IMR-90 (cell line): ENCODE measurements at regions of chr12 and their contacts with region 1.

Region 1: DNA sequence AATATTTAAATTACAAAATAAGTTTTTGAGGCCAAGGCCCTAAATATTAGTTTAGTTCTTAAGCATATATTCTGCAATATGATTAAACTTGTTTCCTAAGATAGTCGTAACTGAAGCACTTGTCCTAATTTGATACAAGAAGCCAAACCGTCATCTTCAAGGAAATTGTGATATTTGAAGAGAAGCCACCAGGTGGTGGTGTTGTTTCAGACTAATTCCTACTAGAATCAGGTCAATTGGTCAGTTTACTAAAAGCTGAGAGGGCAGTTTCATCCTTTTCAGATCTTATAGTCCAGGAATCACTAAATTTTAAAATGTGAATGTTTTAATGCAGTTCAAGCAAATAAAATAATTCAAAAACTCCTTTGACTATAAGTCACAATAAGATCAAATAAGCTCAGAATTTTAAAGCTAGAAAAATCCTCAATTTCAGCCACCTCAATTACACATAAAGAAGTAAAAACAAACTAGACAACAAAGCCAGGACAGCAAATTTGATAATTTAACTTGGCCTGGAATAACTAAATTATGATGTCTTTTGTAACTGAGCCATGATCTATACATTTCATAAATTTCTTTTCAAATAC is 7.1 kb upstream of the ARL1 start:
- DNase-seq: peak; percentile 67
- ATAC-seq: peak; percentile 72; the same call in 1 of the 2 replicates
- H3K4me3 ChIP-seq: no peak overlapping the region
- H3K27ac ChIP-seq: no peak overlapping the region
- H3K4me1 ChIP-seq: no peaks in the 10 kb centered on the region
- H3K27me3 ChIP-seq: no peaks in the 10 kb centered on the region
- CTCF ChIP-seq: peak; percentile 64
- POLR2A ChIP-seq: no peak
- RAD21 ChIP-seq: peak; percentile 69

Region 2: GRCh38 chr12:101305226-101305779 is 109.3 kb before region 1 on chr12:
- CTCF ChIA-PET with region 1: no interaction called
- POLR2A ChIA-PET with region 1: no interaction called
- dilution Hi-C with region 1: no loop called
- in situ Hi-C with region 1: no loop called
- intact Hi-C with region 1: no loop called
- DNase-seq: no peak
- ATAC-seq: no peak
- H3K4me3 ChIP-seq: no peak overlapping the region
- H3K27ac ChIP-seq: no peak overlapping the region
- H3K4me1 ChIP-seq: peaks cover 1% of the 10 kb centered on the region; the same call in 1 of the 2 replicates
- H3K27me3 ChIP-seq: no peaks in the 10 kb centered on the region
- CTCF ChIP-seq: no peak
- POLR2A ChIP-seq: no peak
- RAD21 ChIP-seq: no peak

Region 3: DNA sequence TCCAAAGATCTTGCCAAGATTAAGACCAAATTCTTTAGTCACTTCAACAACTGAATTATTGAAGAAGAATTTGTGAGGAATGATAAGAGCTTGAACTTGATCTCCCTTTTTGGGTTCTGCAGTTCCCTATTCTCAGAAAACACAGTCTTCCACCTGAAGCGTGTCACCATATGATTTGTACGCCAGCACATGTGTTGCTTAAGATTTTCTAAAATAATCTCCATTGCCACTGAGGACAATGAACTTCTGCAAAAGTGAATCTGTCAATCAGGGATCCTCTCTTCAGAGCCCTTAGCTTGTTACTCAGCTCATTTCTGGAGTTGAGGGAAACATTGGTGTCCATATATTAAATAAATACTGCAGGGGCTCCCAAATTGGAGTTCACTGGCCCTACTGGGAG is 56.3 kb after region 1 on chr12:
- CTCF ChIA-PET with region 1: no interaction called
- POLR2A ChIA-PET with region 1: no interaction called
- dilution Hi-C with region 1: no loop called
- in situ Hi-C with region 1: no loop called
- intact Hi-C with region 1: no loop called
- DNase-seq: no peak
- ATAC-seq: no peak
- H3K4me3 ChIP-seq: no peak overlapping the region
- H3K27ac ChIP-seq: no peak overlapping the region
- H3K4me1 ChIP-seq: no peaks in the 10 kb centered on the region
- H3K27me3 ChIP-seq: no peaks in the 10 kb centered on the region; the same call in 1 of the 2 replicates
- CTCF ChIP-seq: no peak
- POLR2A ChIP-seq: no peak
- RAD21 ChIP-seq: no peak

Region 4: DNA sequence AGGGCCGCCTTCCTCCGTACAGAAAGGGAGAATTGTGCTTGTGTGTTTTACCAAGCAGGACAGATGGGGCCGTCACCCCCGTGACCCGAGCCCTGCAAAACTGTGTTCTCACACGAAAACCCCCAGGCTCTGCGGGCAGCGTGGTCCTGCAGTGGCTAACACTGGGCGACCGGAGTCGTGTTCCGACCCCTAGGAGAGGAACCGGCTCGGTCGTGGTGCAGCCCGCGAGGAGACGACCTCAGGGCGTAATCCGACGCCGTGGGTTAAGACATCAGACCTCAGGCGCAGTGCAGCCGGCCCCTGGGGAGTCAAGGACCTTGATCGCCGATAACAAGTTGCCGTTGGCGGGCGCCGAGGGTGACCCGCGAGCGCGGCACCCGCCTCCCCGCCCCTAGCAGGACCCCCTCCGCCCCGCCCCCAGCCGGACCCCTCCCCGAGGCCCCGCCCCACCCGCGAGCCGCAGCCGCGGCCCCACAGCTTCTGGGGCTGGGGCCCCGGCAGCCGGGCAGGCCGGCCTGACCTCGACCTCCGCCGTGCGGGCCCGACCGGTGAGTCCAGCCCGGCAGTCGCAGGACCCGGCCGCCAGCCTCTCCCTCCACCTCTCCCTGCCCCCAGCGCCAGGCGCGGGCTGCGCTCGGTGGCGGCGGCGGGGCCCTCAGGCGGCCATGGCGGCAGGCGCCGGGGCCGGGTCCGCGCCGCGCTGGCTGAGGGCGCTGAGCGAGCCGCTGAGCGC is 282.7 kb after region 1 on chr12 and contains the start of gene CHPT1:
- CTCF ChIA-PET with region 1: no interaction called
- POLR2A ChIA-PET with region 1: no interaction called
- dilution Hi-C with region 1: no loop called
- in situ Hi-C with region 1: no loop called
- intact Hi-C with region 1: loop called (anchors 2 kb)
- DNase-seq: peak; percentile 38
- ATAC-seq: peak; percentile 86
- H3K4me3 ChIP-seq: peak within 1 kb of the TSS; percentile 99
- H3K27ac ChIP-seq: peak within 1 kb of the TSS; percentile 91
- H3K4me1 ChIP-seq: peaks cover 7% of the 10 kb centered on the region
- H3K27me3 ChIP-seq: no peaks in the 10 kb centered on the region
- CTCF ChIP-seq: 0 out of 2 replicates have a peak, but pooled peaks have one; percentile 2
- POLR2A ChIP-seq: no peak
- RAD21 ChIP-seq: no peak
- total RNA-seq, gene CHPT1: 8.1 and 18.6 TPM in 2 replicates

Region 5: DNA sequence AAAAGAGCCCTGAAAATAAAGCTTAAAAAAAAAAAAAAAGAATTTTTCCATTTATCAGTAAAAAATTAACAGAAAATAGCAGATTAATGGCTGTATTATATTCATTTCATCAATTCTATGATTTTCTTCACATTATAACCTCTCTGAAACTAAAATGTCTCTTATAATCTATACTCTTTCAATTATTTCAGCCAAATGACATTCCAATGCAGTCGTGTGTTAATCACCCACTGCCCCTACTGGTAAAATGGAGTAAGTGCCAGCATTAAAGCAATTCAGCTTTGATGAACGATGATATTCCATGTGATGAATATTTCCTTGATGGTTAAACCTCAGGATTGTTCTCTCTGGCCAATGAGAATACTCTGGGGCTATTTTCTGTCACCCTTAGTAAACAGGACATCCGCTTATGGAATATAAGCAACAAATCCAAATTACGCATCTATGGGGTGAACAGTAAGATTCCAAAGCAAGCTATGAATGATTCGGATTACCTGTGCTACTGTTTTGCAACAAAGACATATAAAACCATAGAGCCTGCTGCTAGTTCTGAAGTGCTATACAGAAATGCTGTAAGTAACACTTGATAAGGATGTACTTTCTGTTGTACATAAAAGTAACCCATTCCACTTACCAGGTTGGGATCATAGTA is 344.9 kb after region 1 on chr12:
- CTCF ChIA-PET with region 1: interaction called, 4 read pairs
- POLR2A ChIA-PET with region 1: no interaction called
- dilution Hi-C with region 1: no loop called
- in situ Hi-C with region 1: loop called (anchors 10 kb)
- intact Hi-C with region 1: loop called (anchors 2 kb)
- DNase-seq: peak; percentile 35
- ATAC-seq: peak; percentile 75
- H3K4me3 ChIP-seq: no peak overlapping the region
- H3K27ac ChIP-seq: no peak overlapping the region
- H3K4me1 ChIP-seq: no peaks in the 10 kb centered on the region
- H3K27me3 ChIP-seq: no peaks in the 10 kb centered on the region
- CTCF ChIP-seq: peak; percentile 73
- POLR2A ChIP-seq: no peak
- RAD21 ChIP-seq: peak; percentile 65

Region 6: DNA sequence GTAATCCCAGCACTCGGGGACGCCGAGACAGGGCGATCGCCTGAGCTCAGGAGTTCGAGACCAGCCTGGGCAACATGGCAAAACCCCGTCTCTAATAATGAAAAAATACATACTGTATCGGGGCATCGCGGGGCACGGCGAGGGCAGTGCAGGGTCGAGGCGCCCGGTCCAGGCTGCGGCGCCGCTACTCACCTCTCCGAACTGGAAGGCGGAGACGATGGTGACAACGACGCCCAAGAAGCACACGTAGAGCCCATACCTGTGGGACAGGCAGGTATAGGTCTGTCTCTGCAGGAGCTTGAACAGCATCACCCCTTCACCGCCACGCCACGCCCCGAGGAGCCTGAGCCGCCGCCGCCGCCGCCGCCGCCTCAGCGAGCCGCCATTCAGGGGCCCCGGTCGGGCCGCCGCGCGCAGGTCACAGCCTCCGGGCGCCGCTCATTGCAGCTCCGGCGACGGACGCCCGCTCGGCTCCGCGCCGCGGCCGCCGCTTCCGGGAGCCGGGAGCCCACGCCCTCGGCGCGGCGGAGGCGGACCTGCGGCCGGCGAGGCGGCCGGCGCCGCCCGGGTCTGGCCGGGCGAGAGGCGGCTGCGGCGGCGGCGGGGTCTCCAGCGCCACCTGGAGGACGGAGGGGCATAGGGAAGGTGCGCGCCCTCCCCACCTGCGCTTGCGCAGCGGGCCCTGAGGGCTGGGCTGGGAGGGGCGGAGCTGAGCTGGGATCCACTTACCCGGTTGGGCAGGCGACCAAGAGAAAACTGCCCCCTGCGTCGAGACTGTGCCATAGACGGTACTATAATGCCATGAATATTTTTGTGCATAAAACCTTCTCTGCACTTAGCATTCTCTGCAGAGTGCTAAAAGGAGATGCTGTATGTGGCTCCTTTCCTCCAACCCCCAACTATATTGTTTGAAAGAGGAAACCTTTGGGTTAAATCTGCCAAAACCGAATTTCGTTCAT is 416.0 kb after region 1 on chr12 and contains the start of gene GNPTAB:
- CTCF ChIA-PET with region 1: no interaction called
- POLR2A ChIA-PET with region 1: interaction called, 14 read pairs
- dilution Hi-C with region 1: no loop called
- in situ Hi-C with region 1: no loop called
- intact Hi-C with region 1: loop called (anchors 2 kb)
- DNase-seq: peak; percentile 88
- ATAC-seq: peak; percentile 99
- H3K4me3 ChIP-seq: peak within 1 kb of the TSS; percentile 97
- H3K27ac ChIP-seq: peak within 1 kb of the TSS; percentile 56
- H3K4me1 ChIP-seq: no peaks in the 10 kb centered on the region
- H3K27me3 ChIP-seq: no peaks in the 10 kb centered on the region
- CTCF ChIP-seq: peak; percentile 94
- POLR2A ChIP-seq: peak; percentile 41; the same call in 1 of the 2 replicates
- RAD21 ChIP-seq: peak; percentile 63
- total RNA-seq, gene GNPTAB: 24.2 and 28.9 TPM in 2 replicates

Region 7: DNA sequence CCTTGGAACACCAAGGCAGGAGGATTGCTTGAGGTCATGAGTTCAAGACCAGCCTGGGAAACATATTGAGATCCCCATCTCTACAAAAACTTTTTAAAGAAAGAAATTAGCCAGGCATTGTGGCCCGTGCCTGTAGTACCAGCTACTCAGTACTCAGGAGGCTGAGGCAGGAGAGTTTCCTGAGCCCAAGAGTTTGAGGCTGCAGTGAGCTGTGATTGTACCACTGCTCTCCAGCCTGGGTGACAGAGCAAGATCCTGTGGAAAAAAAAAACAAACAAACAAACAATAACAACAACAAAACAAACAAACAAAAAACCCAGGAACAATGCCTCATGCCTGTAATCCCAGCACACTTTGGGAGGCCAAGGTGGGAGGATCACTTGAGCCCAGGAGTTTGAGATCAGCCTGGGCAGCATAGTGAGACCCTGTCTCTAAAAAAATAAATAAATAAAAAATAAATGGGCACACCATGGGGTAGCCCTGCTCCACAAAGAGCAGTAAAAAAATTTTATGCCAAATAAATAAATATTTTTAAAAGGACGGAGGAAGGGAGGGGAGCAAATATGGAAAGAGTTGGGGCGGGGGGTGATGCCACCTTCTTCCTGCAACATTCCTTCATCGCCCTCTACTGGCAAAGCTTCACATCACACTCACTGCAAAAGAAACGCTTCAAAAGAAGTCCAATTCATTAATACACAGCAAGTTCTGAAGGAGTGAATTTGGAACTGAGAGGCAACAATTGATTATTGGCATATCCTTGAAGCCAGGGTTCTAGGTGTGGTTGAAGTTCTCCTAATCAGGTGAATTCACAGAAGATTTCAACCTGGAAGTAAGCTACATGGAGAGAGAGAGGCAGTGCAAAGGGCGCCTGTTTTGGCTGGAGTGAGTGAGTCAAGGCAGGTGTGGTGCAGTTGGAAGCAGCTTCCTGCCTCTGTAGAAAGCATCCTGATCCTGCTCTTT is 425.0 kb after region 1 on chr12:
- CTCF ChIA-PET with region 1: interaction called, 3 read pairs
- POLR2A ChIA-PET with region 1: no interaction called
- dilution Hi-C with region 1: no loop called
- in situ Hi-C with region 1: loop called (anchors 5 kb)
- intact Hi-C with region 1: no loop called
- DNase-seq: peak; percentile 68
- ATAC-seq: peak; percentile 92
- H3K4me3 ChIP-seq: no peak overlapping the region
- H3K27ac ChIP-seq: no peak overlapping the region
- H3K4me1 ChIP-seq: no peaks in the 10 kb centered on the region
- H3K27me3 ChIP-seq: no peaks in the 10 kb centered on the region
- CTCF ChIP-seq: peak; percentile 75
- POLR2A ChIP-seq: no peak
- RAD21 ChIP-seq: peak; percentile 74

Region 8: GRCh38 chr12:101876861-101877815 is 462.5 kb after region 1 on chr12 and contains the start of gene DRAM1:
- CTCF ChIA-PET with region 1: no interaction called
- POLR2A ChIA-PET with region 1: interaction called, 18 read pairs
- dilution Hi-C with region 1: no loop called
- in situ Hi-C with region 1: no loop called
- intact Hi-C with region 1: no loop called
- DNase-seq: peak; percentile 89
- ATAC-seq: peak; percentile 95
- H3K4me3 ChIP-seq: peak within 1 kb of the TSS; percentile 99
- H3K27ac ChIP-seq: peak within 1 kb of the TSS; percentile 99
- H3K4me1 ChIP-seq: peaks cover 1% of the 10 kb centered on the region
- H3K27me3 ChIP-seq: no peaks in the 10 kb centered on the region
- CTCF ChIP-seq: 0 out of 2 replicates have a peak, but pooled peaks have one; percentile 6
- POLR2A ChIP-seq: peak; percentile 88
- RAD21 ChIP-seq: no peak
- total RNA-seq, gene DRAM1: 27.2 and 27.5 TPM in 2 replicates

Region 9: GRCh38 chr12:102740141-102740955 is 1325.7 kb after region 1 on chr12:
- CTCF ChIA-PET with region 1: no interaction called
- POLR2A ChIA-PET with region 1: no interaction called
- dilution Hi-C with region 1: no loop called
- in situ Hi-C with region 1: no loop called
- intact Hi-C with region 1: loop called (anchors 10 kb)
- DNase-seq: peak; percentile 36
- ATAC-seq: peak; percentile 68; the same call in 1 of the 2 replicates
- H3K4me3 ChIP-seq: no peak overlapping the region
- H3K27ac ChIP-seq: no peak overlapping the region
- H3K4me1 ChIP-seq: no peaks in the 10 kb centered on the region
- H3K27me3 ChIP-seq: no peaks in the 10 kb centered on the region
- CTCF ChIP-seq: peak; percentile 46
- POLR2A ChIP-seq: no peak
- RAD21 ChIP-seq: peak; percentile 63